MCF 10A (cell line): ENCODE measurements at regions of chr1 and their contacts with region 1.

Region 1: GRCh38 chr1:192808518-192809306 is at the start of gene RGS2:
- DNase-seq: peak; percentile 95
- H3K4me3 Mint-ChIP-seq: peak within 1 kb of the TSS; percentile 97
- H3K27ac Mint-ChIP-seq: peak within 1 kb of the TSS; percentile 90
- H3K4me1 Mint-ChIP-seq: peaks cover 28% of the 10 kb centered on the region
- H3K27me3 Mint-ChIP-seq: no peaks in the 10 kb centered on the region
- CTCF ChIP-seq: no peak
- total RNA-seq, gene RGS2: 31.5 and 42.6 TPM in 2 replicates

Region 2: DNA sequence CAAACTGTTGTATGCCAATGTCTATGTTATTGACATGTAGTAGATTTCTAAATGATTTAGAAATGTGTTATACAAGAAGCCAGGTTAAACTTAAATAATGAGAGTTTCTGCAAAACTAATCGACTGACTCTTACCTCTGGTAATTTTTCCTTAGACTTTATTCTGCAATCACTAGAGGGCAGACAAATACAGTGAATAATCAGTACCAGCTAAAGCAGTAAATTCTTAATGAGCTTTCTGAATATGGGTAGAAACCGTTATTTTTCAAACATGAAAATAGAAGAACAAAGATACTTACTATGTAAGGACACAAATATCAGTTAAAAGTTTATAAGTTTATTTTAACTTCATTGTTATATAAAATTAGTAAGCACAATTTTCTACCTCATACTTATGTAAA is 331.1 kb before region 1 on chr1:
- CTCF ChIA-PET with region 1: interaction called, 71 read pairs
- POLR2A ChIA-PET with region 1: interaction called, 4 read pairs
- intact Hi-C with region 1: loop called (anchors 1 kb)
- DNase-seq: peak; percentile 63
- H3K4me3 Mint-ChIP-seq: no peak overlapping the region
- H3K27ac Mint-ChIP-seq: no peak overlapping the region
- H3K4me1 Mint-ChIP-seq: peaks cover 8% of the 10 kb centered on the region
- H3K27me3 Mint-ChIP-seq: no peaks in the 10 kb centered on the region
- CTCF ChIP-seq: peak; percentile 75

Region 3: DNA sequence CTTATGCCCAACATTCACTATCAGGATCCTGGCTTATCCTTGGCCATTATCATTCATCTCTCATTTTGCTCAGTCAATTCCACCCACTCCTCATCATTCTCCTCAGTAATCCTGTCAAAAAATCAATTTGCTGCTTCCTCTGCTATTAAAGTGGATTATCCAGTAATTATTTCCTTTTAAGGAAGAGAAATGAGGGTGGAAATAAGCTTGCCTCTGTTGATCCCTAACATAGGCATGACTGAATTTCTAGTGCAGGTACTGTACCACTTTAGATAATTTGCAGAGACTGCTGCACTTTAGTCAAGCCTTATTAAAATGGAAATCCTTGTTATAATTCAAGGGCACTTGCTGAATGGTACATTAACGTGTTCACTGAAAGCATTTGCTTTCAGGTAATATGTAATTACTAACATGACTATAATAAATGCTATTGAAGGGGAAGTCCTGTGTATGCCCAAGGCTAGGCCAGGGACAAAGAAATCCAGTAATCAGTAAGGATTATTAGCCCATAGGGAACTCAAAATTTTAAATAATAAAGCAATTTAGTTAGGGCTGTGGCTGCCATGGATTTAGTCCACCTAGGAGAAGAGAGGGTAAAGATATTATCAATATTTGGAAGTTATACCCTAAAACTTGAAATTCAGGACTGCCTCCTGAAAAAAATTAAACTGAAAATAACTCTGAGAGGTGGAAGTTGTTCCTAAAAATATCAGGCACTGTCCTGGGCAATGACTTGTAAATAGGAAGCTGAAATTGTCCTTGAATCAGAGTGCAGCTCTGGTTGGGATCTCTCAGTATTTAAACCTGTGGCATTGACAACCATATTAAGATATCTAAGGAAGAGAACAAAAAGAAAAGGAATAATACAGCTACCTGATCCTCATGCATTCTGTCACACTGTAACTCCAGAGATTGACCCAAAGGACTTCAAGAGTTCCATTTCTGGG is 43.6 kb after region 1 on chr1:
- CTCF ChIA-PET with region 1: interaction called, 12 read pairs
- POLR2A ChIA-PET with region 1: interaction called, 8 read pairs
- intact Hi-C with region 1: no loop called
- DNase-seq: no peak
- H3K4me3 Mint-ChIP-seq: no peak overlapping the region
- H3K27ac Mint-ChIP-seq: no peak overlapping the region
- H3K4me1 Mint-ChIP-seq: no peaks in the 10 kb centered on the region
- H3K27me3 Mint-ChIP-seq: no peaks in the 10 kb centered on the region
- CTCF ChIP-seq: no peak

Region 4: DNA sequence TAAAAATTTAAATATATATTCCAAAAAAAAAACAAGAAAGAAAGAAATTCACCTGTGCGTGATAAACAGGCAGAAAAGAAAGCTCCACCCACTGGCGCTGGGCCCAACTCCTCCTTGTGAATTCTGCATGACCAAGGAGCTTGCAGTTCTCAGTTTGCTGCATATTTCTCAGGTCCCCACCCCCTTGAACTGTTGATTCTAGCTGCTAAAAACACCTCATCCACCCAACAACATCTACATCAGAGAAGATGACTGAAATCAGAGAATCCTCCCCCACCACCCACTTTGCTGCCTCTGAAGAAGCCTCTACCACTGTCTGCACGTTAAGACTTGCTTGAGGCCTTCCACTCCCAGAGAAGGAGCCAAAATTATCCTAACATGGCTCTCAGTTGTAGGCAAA is 105.0 kb after region 1 on chr1:
- CTCF ChIA-PET with region 1: interaction called, 96 read pairs
- POLR2A ChIA-PET with region 1: interaction called, 421 read pairs
- intact Hi-C with region 1: no loop called
- DNase-seq: peak; percentile 57
- H3K4me3 Mint-ChIP-seq: no peak overlapping the region
- H3K27ac Mint-ChIP-seq: peak overlapping the region; percentile 92
- H3K4me1 Mint-ChIP-seq: peaks cover 27% of the 10 kb centered on the region
- H3K27me3 Mint-ChIP-seq: no peaks in the 10 kb centered on the region
- CTCF ChIP-seq: no peak

Region 5: GRCh38 chr1:192998536-192998935 is 189.8 kb after region 1 on chr1:
- CTCF ChIA-PET with region 1: interaction called, 29 read pairs
- POLR2A ChIA-PET with region 1: interaction called, 5 read pairs
- intact Hi-C with region 1: no loop called
- DNase-seq: no peak
- H3K4me3 Mint-ChIP-seq: no peak overlapping the region
- H3K27ac Mint-ChIP-seq: peak overlapping the region; percentile 39
- H3K4me1 Mint-ChIP-seq: no peaks in the 10 kb centered on the region
- H3K27me3 Mint-ChIP-seq: no peaks in the 10 kb centered on the region
- CTCF ChIP-seq: peak; percentile 27

Region 6: DNA sequence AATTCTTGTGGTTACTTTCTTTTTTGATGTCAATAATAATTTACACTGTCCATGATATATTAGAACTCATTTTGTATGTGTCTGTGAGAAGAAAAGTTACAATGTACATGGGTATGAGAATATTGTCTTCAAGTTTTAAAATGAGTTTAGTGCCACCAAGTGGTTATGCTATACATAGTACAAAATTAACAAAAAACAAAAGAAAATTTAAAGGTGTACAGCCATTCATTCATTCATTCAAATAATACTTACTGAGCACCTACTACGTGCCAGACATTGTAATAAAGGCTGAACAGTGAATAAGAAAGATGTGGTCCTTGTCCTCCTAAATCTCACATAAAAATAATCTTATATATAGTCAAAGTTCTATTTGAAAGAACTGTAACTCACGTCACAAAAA is 222.7 kb after region 1 on chr1:
- CTCF ChIA-PET with region 1: interaction called, 71 read pairs
- POLR2A ChIA-PET with region 1: interaction called, 19 read pairs
- intact Hi-C with region 1: no loop called
- DNase-seq: peak; percentile 31
- H3K4me3 Mint-ChIP-seq: no peak overlapping the region
- H3K27ac Mint-ChIP-seq: no peak overlapping the region
- H3K4me1 Mint-ChIP-seq: no peaks in the 10 kb centered on the region
- H3K27me3 Mint-ChIP-seq: no peaks in the 10 kb centered on the region
- CTCF ChIP-seq: peak; percentile 54